ENCODE measurements at regions of chr1 and their contacts with region 1.

Region 1: GRCh38 chr1:39003794-39004193 is 12.7 kb downstream of the AKIRIN1 start:
- DNase-seq: no peak
- H3K4me3 Mint-ChIP-seq: no peak overlapping the region
- H3K27ac Mint-ChIP-seq: peak overlapping the region; percentile 83
- H3K4me1 Mint-ChIP-seq: peaks cover 41% of the 10 kb centered on the region
- H3K27me3 Mint-ChIP-seq: no peaks in the 10 kb centered on the region

Region 2: DNA sequence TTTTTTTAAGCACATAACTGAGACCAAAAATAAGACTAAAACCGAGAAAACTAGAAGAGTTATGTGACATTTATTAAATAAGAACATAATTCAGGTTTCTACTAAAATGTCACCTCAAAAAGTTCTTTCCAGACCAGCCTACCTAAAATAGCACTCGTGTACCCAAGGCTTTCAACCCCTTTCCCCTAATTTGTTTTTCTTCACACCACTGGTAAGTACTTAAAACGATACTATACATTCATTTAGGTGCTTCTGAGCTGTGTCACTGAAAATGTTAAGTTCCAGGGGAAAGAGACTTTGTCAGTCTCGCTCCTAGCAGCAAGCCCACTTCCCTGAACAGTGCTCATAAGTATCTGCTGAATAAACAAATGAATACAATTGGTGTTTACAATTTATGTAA is 151.0 kb before region 1 on chr1:
- CTCF ChIA-PET with region 1: no interaction called
- intact Hi-C with region 1: loop called (anchors 2 kb)
- DNase-seq: peak; percentile 46
- H3K4me3 Mint-ChIP-seq: peak overlapping the region; percentile 26
- H3K27ac Mint-ChIP-seq: peak overlapping the region; percentile 78
- H3K4me1 Mint-ChIP-seq: peaks cover 38% of the 10 kb centered on the region
- H3K27me3 Mint-ChIP-seq: no peaks in the 10 kb centered on the region

Region 3: GRCh38 chr1:39189592-39190041 is 185.8 kb after region 1 on chr1:
- CTCF ChIA-PET with region 1: no interaction called
- intact Hi-C with region 1: loop called (anchors 5 kb)
- DNase-seq: no peak
- H3K4me3 Mint-ChIP-seq: no peak overlapping the region
- H3K27ac Mint-ChIP-seq: no peak overlapping the region
- H3K4me1 Mint-ChIP-seq: peaks cover 86% of the 10 kb centered on the region
- H3K27me3 Mint-ChIP-seq: no peaks in the 10 kb centered on the region

Region 4: GRCh38 chr1:39238476-39238875 is 234.7 kb after region 1 on chr1:
- CTCF ChIA-PET with region 1: no interaction called
- intact Hi-C with region 1: no loop called
- DNase-seq: no peak
- H3K4me3 Mint-ChIP-seq: no peak overlapping the region
- H3K27ac Mint-ChIP-seq: peak overlapping the region; percentile 17
- H3K4me1 Mint-ChIP-seq: peaks cover 52% of the 10 kb centered on the region
- H3K27me3 Mint-ChIP-seq: no peaks in the 10 kb centered on the region

Measured in activated naive CD4-positive, alpha-beta T cell treated with anti-CD3 and anti-CD28 coated beads for 36 hours (primary cell).